HepG2 (cell line): ENCODE measurements at regions of chr12 and their contacts with region 1.

Region 1: GRCh38 chr12:106136263-106136662 is 2.5 kb downstream of the NUAK1 start:
- DNase-seq: peak; percentile 73
- ATAC-seq: no peak
- H3K4me3 ChIP-seq: peak overlapping the region in 1 of 3 experiments; percentile 31; a peak in 3 of 6 replicates
- H3K27ac ChIP-seq: no peak overlapping the region
- H3K4me1 ChIP-seq: peaks cover 79% of the 10 kb centered on the region
- H3K27me3 ChIP-seq: peaks cover 0 to 13% of the 10 kb centered on the region in 2 experiments; a peak in 2 of 5 replicates
- CTCF ChIP-seq: peak; percentile 87
- EP300 ChIP-seq: no peak
- POLR2A ChIP-seq: no peak
- RAD21 ChIP-seq: peak; percentile 89

Region 2: DNA sequence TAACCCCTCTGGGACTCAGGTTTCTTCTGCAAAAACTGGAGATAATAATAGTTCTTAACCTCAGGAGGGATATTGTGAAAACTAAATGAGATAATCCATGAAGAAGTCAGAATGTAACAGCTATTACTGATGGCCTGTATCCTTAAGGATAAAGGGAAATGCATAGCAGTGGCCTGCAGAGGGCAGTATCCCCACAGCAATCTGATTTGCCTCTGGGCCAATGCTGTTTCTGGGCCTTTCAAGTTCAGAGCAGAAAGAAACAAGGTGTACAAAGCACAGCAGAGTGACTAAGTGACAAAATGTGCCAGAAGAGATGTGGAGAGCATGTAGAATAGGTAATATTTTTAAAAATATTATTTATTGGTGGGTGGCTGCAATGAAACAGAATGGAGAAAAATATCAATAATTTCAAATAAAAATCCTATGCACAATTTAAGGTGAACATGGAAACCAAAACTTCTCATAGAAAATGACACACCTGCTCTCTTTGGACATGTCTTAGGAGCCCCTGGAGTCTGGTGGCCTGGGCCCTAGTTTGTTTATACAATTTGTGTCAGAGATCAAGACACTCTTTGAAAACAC is 715.5 kb before region 1 on chr12:
- CTCF ChIA-PET with region 1: interaction called, 8 read pairs
- POLR2A ChIA-PET with region 1: no interaction called
- in situ Hi-C with region 1: loop called (anchors 10 kb)
- intact Hi-C with region 1: loop called (anchors 2 kb)
- DNase-seq: peak; percentile 45
- ATAC-seq: peak; percentile 85
- H3K4me3 ChIP-seq: no peak overlapping the region
- H3K27ac ChIP-seq: no peak overlapping the region
- H3K4me1 ChIP-seq: no peaks in the 10 kb centered on the region
- H3K27me3 ChIP-seq: no peaks in the 10 kb centered on the region
- CTCF ChIP-seq: peak; percentile 87
- EP300 ChIP-seq: no peak
- POLR2A ChIP-seq: no peak
- RAD21 ChIP-seq: peak; percentile 73

Region 3: GRCh38 chr12:105922670-105923102 is 213.6 kb before region 1 on chr12:
- CTCF ChIA-PET with region 1: no interaction called
- POLR2A ChIA-PET with region 1: no interaction called
- in situ Hi-C with region 1: no loop called
- intact Hi-C with region 1: no loop called
- DNase-seq: no peak
- ATAC-seq: no peak
- H3K4me3 ChIP-seq: no peak overlapping the region
- H3K27ac ChIP-seq: no peak overlapping the region
- H3K4me1 ChIP-seq: no peaks in the 10 kb centered on the region
- H3K27me3 ChIP-seq: no peaks in the 10 kb centered on the region
- CTCF ChIP-seq: no peak
- EP300 ChIP-seq: no peak
- POLR2A ChIP-seq: no peak
- RAD21 ChIP-seq: no peak

Region 4: DNA sequence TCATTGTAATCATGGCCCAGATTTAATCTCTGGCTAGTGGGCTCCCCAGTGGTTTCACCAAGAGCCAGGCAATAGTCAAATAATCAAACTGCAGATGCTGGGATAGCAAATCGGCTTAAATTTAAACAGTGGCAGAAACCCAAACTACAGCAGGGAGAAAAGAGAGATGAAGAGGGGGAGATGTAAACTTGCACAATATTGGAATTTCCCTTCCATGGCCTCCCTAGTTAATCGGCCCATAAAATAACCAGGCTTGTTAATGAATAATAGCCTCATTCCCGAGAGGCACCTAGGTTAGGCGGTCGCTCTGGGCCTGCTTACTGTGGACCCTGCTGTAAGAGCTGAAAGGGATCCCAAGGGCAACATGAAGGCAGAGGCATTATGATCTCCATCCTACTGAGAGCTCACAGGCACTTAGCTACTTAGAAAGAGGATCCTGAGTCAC is 113.7 kb before region 1 on chr12:
- CTCF ChIA-PET with region 1: interaction called, 5 read pairs
- POLR2A ChIA-PET with region 1: interaction called, 4 read pairs
- in situ Hi-C with region 1: loop called (anchors 5 kb)
- intact Hi-C with region 1: no loop called
- DNase-seq: peak; percentile 25
- ATAC-seq: peak; percentile 83
- H3K4me3 ChIP-seq: no peak overlapping the region
- H3K27ac ChIP-seq: no peak overlapping the region
- H3K4me1 ChIP-seq: peaks cover 22% of the 10 kb centered on the region
- H3K27me3 ChIP-seq: no peaks in the 10 kb centered on the region
- CTCF ChIP-seq: no peak
- EP300 ChIP-seq: no peak
- POLR2A ChIP-seq: no peak
- RAD21 ChIP-seq: no peak

Region 5: DNA sequence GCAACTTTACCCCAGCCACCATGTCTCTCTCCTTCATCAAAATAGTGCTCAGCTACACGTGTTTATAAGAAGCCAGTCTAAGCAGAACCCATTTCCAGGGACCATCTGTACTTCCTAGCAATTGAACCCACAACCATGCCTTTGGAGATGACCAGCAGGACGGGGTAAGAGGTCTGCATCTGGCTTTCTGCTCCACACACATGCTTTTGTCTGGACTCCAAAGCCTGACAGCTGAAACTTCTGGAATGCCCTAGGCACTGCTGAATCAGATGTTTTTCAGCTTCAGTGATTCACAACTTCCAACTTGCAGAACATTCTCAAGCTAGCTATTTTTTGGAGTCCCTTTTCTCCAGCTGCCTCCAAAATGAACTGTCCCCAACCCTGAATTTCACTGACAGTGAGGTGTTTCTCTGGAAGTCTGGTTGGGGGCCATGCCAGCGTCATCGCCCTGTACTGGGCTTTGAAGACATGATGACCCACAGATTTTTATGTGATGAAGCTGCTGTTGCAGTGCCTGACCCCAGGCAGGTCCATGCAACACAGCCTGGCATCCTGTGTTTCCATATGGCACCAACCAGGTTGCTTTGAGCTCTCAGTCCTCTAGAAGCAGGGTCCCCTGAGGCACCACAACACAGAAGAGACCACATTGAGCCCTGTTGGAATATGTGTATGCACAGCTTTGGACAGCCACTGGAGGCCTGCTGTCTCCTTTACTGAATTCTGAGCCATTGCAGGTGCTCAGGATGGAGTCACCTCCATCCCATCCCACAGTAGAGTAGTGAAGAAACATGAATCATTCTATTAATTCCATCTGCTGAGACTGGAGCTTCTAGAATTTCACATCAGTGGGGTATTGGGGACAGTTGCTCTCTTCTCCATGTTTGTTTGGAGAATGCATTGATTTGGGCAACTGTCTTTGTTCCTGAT is 77.7 kb before region 1 on chr12:
- CTCF ChIA-PET with region 1: no interaction called
- POLR2A ChIA-PET with region 1: no interaction called
- in situ Hi-C with region 1: no loop called
- intact Hi-C with region 1: no loop called
- DNase-seq: no peak
- ATAC-seq: peak; percentile 31; the same call in 1 of the 3 replicates
- H3K4me3 ChIP-seq: no peak overlapping the region
- H3K27ac ChIP-seq: no peak overlapping the region
- H3K4me1 ChIP-seq: no peaks in the 10 kb centered on the region
- H3K27me3 ChIP-seq: no peaks in the 10 kb centered on the region
- CTCF ChIP-seq: no peak
- EP300 ChIP-seq: no peak
- POLR2A ChIP-seq: no peak
- RAD21 ChIP-seq: no peak

Region 6: GRCh38 chr12:106084014-106084671 is 52.1 kb before region 1 on chr12:
- CTCF ChIA-PET with region 1: no interaction called
- POLR2A ChIA-PET with region 1: no interaction called
- in situ Hi-C with region 1: loop called (anchors 10 kb)
- intact Hi-C with region 1: no loop called
- DNase-seq: peak; percentile 29
- ATAC-seq: no peak
- H3K4me3 ChIP-seq: no peak overlapping the region
- H3K27ac ChIP-seq: no peak overlapping the region
- H3K4me1 ChIP-seq: peaks cover 36% of the 10 kb centered on the region
- H3K27me3 ChIP-seq: no peaks in the 10 kb centered on the region
- CTCF ChIP-seq: no peak
- EP300 ChIP-seq: no peak
- POLR2A ChIP-seq: no peak
- RAD21 ChIP-seq: no peak

Region 7: DNA sequence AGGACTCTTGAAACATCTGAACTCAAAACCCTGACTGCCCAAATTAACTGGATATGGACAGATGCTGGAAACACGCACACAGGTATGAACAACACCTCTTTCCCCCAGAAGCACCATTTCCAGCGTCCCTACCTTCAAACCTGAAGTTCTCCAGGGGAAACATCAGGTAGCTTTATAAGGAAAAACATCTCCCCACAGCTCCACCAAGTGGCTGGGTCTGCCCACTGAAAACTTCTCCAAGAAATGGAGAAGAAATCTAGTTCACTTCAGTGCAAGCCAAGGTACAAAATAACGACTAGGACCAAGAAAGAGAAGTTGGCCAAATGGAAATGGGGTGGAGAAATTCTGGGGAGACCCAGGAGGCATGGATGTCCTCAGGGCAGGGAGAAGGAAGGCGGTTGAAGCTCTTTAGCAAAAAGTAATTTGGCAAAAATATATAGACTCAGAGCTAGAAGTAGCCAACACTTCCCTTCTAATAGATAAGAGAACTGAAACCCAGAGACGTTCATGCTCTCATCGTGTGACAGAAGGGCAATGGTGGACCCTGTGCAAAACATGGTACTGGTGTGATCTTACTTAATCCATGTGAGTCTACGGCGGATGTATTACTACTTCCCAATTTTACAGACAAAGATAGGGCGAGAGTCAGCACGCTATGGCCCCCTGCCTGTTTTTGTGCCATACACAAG is 13.0 kb after region 1 on chr12:
- CTCF ChIA-PET with region 1: no interaction called
- POLR2A ChIA-PET with region 1: interaction called, 12 read pairs
- in situ Hi-C with region 1: no loop called
- intact Hi-C with region 1: no loop called
- DNase-seq: no peak
- ATAC-seq: no peak; the same call in 2 of the 3 replicates
- H3K4me3 ChIP-seq: no peak overlapping the region
- H3K27ac ChIP-seq: no peak overlapping the region
- H3K4me1 ChIP-seq: no peaks in the 10 kb centered on the region
- H3K27me3 ChIP-seq: no peaks in the 10 kb centered on the region
- CTCF ChIP-seq: peak; percentile 65
- EP300 ChIP-seq: no peak
- POLR2A ChIP-seq: no peak
- RAD21 ChIP-seq: peak; percentile 41; the same call in 1 of the 2 replicates